GM12878 (cell line): ENCODE measurements at regions of chr17 and their contacts with region 1.

Region 1: GRCh38 chr17:43517615-43518386 is 28.3 kb downstream of the ETV4 start:
- DNase-seq: peak; percentile 82
- ATAC-seq: peak; percentile 93
- H3K4me3 ChIP-seq: no peak overlapping the region
- H3K27ac ChIP-seq: peak overlapping the region; percentile 91
- H3K4me1 ChIP-seq: peaks cover 20% of the 10 kb centered on the region
- H3K27me3 ChIP-seq: no peaks in the 10 kb centered on the region
- CTCF ChIP-seq: no peak
- EP300 ChIP-seq: no peak
- POLR2A ChIP-seq: no peak
- RAD21 ChIP-seq: no peak

Region 2: DNA sequence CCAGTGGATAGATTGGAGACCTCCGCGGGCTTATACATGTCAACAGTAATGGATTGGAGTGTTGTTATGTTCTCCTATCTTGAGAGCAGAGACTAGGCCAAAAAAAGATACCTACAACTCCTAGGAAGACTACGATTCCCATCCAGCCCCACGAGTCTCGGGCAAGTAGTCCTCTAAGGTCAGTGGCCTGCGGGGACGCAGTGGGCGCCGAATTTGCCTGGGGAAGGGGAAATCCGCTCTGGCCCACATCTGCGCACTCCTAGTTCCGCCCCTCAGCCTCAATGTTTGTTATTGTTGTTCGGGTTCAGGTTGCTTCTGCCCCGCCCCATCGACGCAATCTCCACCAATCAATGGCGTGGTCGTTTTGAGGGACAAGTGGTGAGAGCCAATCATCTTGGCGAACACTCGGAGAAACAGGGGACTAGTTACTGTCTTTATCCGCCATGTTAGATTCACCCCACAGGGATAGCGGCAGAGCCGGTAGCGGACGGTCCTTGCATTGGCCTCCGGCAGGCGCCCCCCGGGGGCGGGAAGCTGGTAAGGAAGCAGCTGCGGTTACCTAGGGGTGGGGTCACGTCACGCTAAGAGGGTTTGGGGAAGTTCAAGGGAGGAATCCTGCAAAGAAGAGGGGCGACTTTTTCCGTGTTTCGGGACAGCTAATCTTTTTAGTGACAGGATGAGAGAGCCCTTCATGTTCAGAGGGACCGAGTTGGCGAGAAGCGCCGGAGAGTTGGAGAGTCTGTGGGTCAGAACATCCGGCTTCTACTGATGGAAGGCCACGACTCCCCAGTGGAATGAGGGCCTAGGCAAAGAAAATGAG is 346.8 kb before region 1 on chr17 and contains the start of gene NBR1:
- CTCF ChIA-PET with region 1: no interaction called
- POLR2A ChIA-PET with region 1: no interaction called
- RAD21 ChIA-PET with region 1: no interaction called
- SMC1A ChIA-PET with region 1: no interaction called
- in situ Hi-C with region 1: no loop called
- intact Hi-C with region 1: no loop called
- DNase-seq: peak; percentile 100
- ATAC-seq: peak; percentile 88
- H3K4me3 ChIP-seq: peak within 1 kb of the TSS; percentile 78
- H3K27ac ChIP-seq: peak within 1 kb of the TSS; percentile 96
- H3K4me1 ChIP-seq: no peaks in the 10 kb centered on the region
- H3K27me3 ChIP-seq: no peaks in the 10 kb centered on the region
- CTCF ChIP-seq: peak in 2 of 3 experiments; percentile 21 to 27; a peak in 2 of 6 replicates
- EP300 ChIP-seq: no peak
- POLR2A ChIP-seq: peak; percentile 90
- RAD21 ChIP-seq: peak; percentile 6; the same call in 1 of the 2 replicates
- polyA plus RNA-seq, gene NBR1: 3.5 to 6.2 TPM

Region 3: DNA sequence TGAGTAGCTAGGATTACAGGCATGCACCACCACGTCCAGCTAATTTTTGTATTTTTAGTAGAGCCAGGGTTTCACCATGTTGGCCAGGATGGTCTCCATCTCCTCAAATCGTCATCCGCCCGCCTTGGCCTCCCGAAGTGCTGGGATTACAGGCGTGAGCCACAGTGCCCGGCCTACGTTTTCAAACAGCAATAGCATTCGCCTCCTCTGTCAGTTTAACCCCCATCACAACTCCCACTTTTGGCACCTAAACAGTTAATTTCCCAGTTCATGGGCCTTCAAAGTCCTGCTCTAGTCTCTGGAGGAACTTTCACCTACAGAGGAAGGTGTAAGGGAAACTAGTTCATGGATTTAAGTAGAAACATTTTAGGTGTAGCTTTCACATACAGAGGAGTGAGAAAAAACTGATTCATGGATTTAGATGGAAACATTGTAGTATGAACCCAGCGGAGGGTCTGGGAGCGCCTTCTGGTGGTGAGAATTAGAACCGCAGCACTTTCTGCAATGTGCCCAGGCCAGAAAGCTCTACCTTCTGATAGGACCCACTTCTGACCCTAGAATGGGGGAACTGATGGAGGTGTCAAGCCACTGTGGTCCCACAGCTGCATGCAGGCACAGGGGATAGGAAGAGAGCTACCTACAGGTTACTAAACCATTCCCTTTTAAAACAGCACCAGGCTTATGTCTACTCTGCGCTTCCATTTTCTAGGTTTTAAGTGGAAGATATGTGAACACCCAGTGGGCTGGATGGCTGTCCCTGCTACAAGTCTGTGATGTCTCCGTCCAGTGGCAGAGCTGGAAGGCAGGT is 155.9 kb after region 1 on chr17:
- CTCF ChIA-PET with region 1: interaction called, 19 read pairs
- POLR2A ChIA-PET with region 1: interaction called, 3 read pairs
- RAD21 ChIA-PET with region 1: interaction called, 12 read pairs
- SMC1A ChIA-PET with region 1: interaction called, 18 read pairs
- in situ Hi-C with region 1: no loop called
- intact Hi-C with region 1: loop called (anchors 2 kb)
- DNase-seq: no peak
- ATAC-seq: peak; percentile 48
- H3K4me3 ChIP-seq: no peak overlapping the region
- H3K27ac ChIP-seq: no peak overlapping the region
- H3K4me1 ChIP-seq: peaks cover 42% of the 10 kb centered on the region
- H3K27me3 ChIP-seq: no peaks in the 10 kb centered on the region
- CTCF ChIP-seq: peak; percentile 92 to 97 (median 94)
- EP300 ChIP-seq: no peak
- POLR2A ChIP-seq: no peak
- RAD21 ChIP-seq: peak; percentile 76

Region 4: DNA sequence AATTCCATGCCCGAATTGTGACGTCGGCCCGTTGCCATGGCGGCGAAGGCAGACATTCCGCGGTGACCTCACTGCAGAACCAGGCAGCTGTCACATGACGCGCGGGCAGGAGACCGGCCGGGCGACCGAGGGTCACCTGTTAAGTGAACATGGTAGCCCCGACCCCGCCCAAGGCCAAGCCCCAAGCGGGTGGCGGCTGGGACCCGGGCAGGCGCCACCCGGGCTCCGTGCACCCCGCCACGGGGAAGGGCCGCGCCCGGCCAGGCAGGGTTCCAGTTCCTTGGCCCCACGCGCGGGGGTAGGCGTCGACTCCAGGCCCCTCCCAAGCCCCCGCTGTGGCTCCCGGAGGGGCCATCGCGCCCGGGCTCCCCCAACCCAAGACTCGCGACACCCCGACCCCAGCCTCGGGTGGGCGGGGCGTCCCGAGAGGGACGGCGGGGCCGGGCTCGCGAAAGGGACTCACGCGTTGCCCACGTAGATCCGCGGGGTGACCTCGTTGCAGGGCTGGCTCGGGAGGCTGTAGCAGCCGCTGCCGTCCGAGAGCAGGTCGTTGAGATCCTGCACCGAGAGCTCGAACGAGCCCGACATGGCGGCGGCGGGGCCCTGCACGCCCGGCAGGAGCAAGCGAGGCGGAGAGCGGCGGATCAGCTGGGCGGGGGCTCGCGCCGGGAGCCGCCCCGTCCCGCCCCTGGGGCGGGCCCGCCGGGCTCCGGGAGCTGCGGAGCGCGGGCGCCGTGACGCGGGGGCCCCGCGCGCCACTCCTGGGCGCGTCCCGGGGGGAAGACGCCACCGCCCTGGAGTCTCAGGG is 260.7 kb after region 1 on chr17 and contains the start of gene DUSP3:
- CTCF ChIA-PET with region 1: no interaction called
- POLR2A ChIA-PET with region 1: no interaction called
- RAD21 ChIA-PET with region 1: no interaction called
- SMC1A ChIA-PET with region 1: no interaction called
- in situ Hi-C with region 1: no loop called
- intact Hi-C with region 1: loop called (anchors 5 kb)
- DNase-seq: no peak
- ATAC-seq: peak; percentile 99
- H3K4me3 ChIP-seq: peak within 1 kb of the TSS; percentile 89
- H3K27ac ChIP-seq: peak within 1 kb of the TSS; percentile 52; the same call in 1 of the 2 replicates
- H3K4me1 ChIP-seq: no peaks in the 10 kb centered on the region
- H3K27me3 ChIP-seq: peaks cover 5 to 12% of the 10 kb centered on the region in 2 experiments; a peak in 2 of 4 replicates
- CTCF ChIP-seq: no peak
- EP300 ChIP-seq: no peak
- POLR2A ChIP-seq: peak; percentile 92
- RAD21 ChIP-seq: no peak
- polyA plus RNA-seq, gene DUSP3: 1.5 to 2.1 TPM

Region 5: DNA sequence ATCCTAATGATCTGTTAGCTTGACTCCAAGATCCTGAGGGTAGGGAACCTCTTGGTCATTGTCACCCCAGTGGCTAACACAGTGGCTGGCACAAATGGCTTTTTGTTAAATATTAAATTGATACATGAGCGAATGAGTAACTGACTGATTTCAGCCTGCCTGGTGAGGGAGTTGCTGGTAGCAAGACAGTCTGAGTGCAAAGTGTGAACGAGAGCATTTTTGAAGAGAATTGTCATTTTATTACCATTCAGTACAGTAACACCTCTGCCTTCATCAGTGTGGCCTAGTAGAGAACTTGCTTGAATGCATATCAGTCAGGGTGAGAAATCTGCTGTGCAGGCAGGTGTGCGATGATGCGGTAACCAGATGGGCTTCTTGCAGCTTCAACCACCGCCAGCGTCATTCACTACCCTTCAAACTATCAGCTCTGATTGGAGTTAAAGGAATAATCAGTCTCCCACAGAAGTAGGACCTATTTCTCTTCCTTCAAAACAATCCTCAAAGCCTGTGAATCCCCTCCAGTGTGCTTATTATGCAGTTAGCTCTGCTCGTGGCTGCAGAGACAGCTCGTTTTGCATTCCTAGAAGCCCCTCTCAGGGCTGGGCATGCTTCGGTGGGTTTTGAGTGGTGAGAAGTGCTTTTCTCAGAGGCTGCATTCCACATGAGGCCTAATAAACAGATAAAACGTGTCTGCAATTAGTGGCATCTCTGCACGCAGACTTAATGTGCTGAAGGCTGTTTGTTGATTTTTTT is 1672.9 kb after region 1 on chr17:
- CTCF ChIA-PET with region 1: no interaction called
- POLR2A ChIA-PET with region 1: no interaction called
- RAD21 ChIA-PET with region 1: no interaction called
- SMC1A ChIA-PET with region 1: no interaction called
- in situ Hi-C with region 1: no loop called
- intact Hi-C with region 1: no loop called
- DNase-seq: no peak
- ATAC-seq: peak; percentile 50
- H3K4me3 ChIP-seq: no peak overlapping the region
- H3K27ac ChIP-seq: no peak overlapping the region
- H3K4me1 ChIP-seq: no peaks in the 10 kb centered on the region
- H3K27me3 ChIP-seq: no peaks in the 10 kb centered on the region
- CTCF ChIP-seq: no peak
- EP300 ChIP-seq: no peak
- POLR2A ChIP-seq: no peak
- RAD21 ChIP-seq: no peak